ENCODE measurements at regions of chr7 and their contacts with region 1.

Region 1: GRCh38 chr7:7920481-7920880 is 48.1 kb upstream of the GLCCI1 start:
- DNase-seq: peak; percentile 76
- ATAC-seq: peak; percentile 93
- H3K4me3 ChIP-seq: no peak overlapping the region; the same call in 1 of the 2 replicates
- H3K27ac ChIP-seq: no peak overlapping the region; the same call in 1 of the 2 replicates
- H3K4me1 ChIP-seq: peaks cover 50% of the 10 kb centered on the region
- H3K27me3 ChIP-seq: no peaks in the 10 kb centered on the region
- CTCF ChIP-seq: no peak
- EP300 ChIP-seq: peak; percentile 82 to 91; a peak in 2 of 4 replicates
- POLR2A ChIP-seq: no peak
- RAD21 ChIP-seq: peak; percentile 11; the same call in 1 of the 2 replicates

Region 2: GRCh38 chr7:6092953-6093354 is 1827.5 kb before region 1 on chr7:
- CTCF ChIA-PET with region 1: no interaction called
- POLR2A ChIA-PET with region 1: no interaction called
- RAD21 ChIA-PET with region 1: no interaction called
- SMC1A ChIA-PET with region 1: no interaction called
- in situ Hi-C with region 1: no loop called
- intact Hi-C with region 1: no loop called
- DNase-seq: no peak
- ATAC-seq: no peak
- H3K4me3 ChIP-seq: no peak overlapping the region
- H3K27ac ChIP-seq: no peak overlapping the region
- H3K4me1 ChIP-seq: no peaks in the 10 kb centered on the region
- H3K27me3 ChIP-seq: no peaks in the 10 kb centered on the region
- CTCF ChIP-seq: no peak
- EP300 ChIP-seq: no peak
- POLR2A ChIP-seq: no peak
- RAD21 ChIP-seq: no peak

Region 3: DNA sequence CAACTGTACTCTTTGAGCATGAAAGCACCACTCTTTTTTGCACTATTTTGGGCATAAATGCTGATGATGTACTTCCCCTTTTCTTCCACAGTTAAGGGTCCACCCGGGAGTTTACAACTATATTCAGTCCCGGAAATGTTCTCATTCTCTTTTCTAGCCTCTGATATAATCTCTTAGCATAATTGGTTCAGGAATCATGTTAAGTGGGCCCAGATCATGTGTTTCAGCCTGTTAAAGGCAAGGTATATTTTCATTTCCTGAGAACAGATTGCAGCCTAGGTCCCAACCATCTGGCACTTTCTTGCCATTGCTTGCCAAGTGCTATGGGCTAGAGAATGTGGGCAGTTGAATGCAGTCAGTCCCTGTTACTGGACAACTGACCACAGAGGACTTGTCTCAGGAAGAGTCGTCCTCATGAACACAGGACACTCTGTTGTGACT is 63.3 kb before region 1 on chr7:
- CTCF ChIA-PET with region 1: interaction called, 6 read pairs
- POLR2A ChIA-PET with region 1: no interaction called
- RAD21 ChIA-PET with region 1: interaction called, 13 read pairs
- SMC1A ChIA-PET with region 1: interaction called, 17 read pairs
- in situ Hi-C with region 1: no loop called
- intact Hi-C with region 1: no loop called
- DNase-seq: no peak
- ATAC-seq: peak; percentile 84
- H3K4me3 ChIP-seq: no peak overlapping the region
- H3K27ac ChIP-seq: peak overlapping the region; percentile 29; the same call in 1 of the 2 replicates
- H3K4me1 ChIP-seq: peaks cover 4% of the 10 kb centered on the region
- H3K27me3 ChIP-seq: no peaks in the 10 kb centered on the region
- CTCF ChIP-seq: no peak
- EP300 ChIP-seq: no peak
- POLR2A ChIP-seq: no peak
- RAD21 ChIP-seq: no peak

Region 4: DNA sequence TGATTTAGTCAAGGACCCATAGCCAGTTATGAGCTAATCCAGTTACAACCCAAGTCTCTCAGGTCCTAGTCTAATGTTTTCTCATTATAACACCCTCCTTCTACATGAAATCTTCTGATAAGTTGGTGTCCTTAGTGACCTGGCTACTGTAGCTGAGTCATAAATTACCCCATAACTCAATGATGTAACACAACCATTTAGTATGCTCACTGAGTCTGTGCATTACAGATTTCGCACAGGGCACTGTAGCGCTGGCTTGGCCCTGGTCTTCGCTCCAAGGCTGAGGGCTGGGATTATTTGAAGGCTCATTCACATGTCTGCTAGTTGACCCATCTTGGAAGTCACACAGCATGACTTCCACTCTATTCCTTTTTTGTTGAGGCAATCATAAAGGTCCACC is 12.1 kb after region 1 on chr7:
- CTCF ChIA-PET with region 1: no interaction called
- POLR2A ChIA-PET with region 1: interaction called, 5 read pairs
- RAD21 ChIA-PET with region 1: interaction called, 5 read pairs
- SMC1A ChIA-PET with region 1: interaction called, 11 read pairs
- in situ Hi-C with region 1: no loop called
- intact Hi-C with region 1: no loop called
- DNase-seq: no peak
- ATAC-seq: no peak
- H3K4me3 ChIP-seq: no peak overlapping the region
- H3K27ac ChIP-seq: no peak overlapping the region
- H3K4me1 ChIP-seq: no peaks in the 10 kb centered on the region
- H3K27me3 ChIP-seq: no peaks in the 10 kb centered on the region
- CTCF ChIP-seq: no peak
- EP300 ChIP-seq: no peak
- POLR2A ChIP-seq: no peak
- RAD21 ChIP-seq: no peak

Region 5: GRCh38 chr7:7959979-7960670 is 39.6 kb after region 1 on chr7:
- CTCF ChIA-PET with region 1: interaction called, 8 read pairs
- POLR2A ChIA-PET with region 1: interaction called, 17 read pairs
- RAD21 ChIA-PET with region 1: interaction called, 52 read pairs
- SMC1A ChIA-PET with region 1: interaction called, 59 read pairs
- in situ Hi-C with region 1: no loop called
- intact Hi-C with region 1: no loop called
- DNase-seq: peak; percentile 79
- ATAC-seq: peak; percentile 94
- H3K4me3 ChIP-seq: no peak overlapping the region
- H3K27ac ChIP-seq: peak overlapping the region; percentile 43; the same call in 1 of the 2 replicates
- H3K4me1 ChIP-seq: peaks cover 42% of the 10 kb centered on the region
- H3K27me3 ChIP-seq: no peaks in the 10 kb centered on the region
- CTCF ChIP-seq: no peak
- EP300 ChIP-seq: peak; percentile 9 to 48; a peak in 1 of 4 replicates
- POLR2A ChIP-seq: no peak
- RAD21 ChIP-seq: peak; percentile 19; the same call in 1 of the 2 replicates

Region 6: DNA sequence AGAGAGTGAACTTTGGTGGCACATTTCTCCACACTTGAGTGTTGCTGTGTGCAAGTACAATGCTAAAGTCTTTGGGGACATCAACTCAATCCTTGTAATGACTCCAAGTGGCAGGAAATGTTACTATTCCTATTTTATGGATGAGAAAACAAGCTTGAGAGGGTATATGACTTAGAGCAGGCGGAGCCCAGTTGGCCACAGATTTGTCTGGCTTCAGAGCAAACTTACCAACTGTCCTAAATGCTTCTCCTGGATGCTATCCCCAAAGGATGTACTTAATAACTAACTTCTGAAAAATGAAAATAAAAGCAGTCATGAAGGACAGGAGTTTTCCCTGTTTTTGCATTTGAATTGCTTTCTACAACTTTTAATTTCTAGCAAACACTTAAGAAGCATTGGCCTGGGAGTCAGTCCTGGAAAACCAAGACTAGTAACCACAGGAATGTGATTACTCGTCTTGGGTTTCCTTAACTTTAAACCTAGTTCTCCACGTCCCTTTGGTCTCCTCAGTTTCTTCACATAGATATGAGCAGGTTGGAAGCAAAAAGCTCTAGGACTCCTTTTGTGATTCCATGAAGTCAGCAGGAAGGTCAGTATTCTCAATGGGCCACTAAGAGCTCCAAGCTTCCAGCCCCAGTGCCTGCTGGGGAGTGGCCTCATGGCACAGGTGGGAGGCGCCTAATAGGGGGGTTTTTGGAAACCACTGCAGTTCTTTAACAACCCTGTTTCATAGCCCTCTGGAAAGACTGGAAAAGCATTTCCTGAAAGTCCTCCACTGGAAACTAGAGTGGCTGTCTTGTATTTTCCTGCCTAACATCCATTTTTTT is 188.9 kb after region 1 on chr7:
- CTCF ChIA-PET with region 1: no interaction called
- POLR2A ChIA-PET with region 1: no interaction called
- RAD21 ChIA-PET with region 1: no interaction called
- SMC1A ChIA-PET with region 1: no interaction called
- in situ Hi-C with region 1: no loop called
- intact Hi-C with region 1: no loop called
- DNase-seq: no peak
- ATAC-seq: no peak
- H3K4me3 ChIP-seq: no peak overlapping the region
- H3K27ac ChIP-seq: no peak overlapping the region
- H3K4me1 ChIP-seq: peaks cover 12% of the 10 kb centered on the region
- H3K27me3 ChIP-seq: no peaks in the 10 kb centered on the region
- CTCF ChIP-seq: no peak
- EP300 ChIP-seq: no peak
- POLR2A ChIP-seq: no peak
- RAD21 ChIP-seq: no peak

Region 7: DNA sequence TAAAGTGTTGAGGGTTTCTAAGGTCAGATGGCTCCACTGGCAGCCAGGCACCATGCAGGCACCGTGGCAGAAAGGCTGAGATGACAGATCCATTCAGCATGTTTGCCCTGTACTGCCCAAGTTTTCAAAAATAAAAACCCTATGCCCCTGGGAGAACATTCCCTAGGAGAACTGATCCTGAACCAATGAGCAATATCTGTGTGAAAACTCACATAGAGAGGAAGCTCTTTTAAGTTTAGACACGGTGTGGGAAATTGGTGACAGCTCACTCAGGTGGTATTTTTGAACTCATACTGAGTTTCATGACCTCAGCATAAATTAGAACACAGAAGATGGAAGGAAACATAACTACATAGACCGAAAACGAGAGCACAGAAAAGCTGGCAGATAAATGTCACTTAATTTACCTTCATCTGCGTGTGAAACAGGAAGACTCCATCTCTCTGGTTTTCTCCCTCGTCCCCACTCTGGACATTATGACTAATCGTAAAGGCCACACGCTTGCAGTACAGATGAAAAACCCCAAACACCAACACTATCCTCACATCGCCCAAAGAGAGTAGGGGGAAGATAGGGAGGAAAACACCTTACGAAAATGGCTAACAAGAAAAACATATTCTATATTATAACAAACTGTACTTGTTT is 213.7 kb after region 1 on chr7:
- CTCF ChIA-PET with region 1: no interaction called
- POLR2A ChIA-PET with region 1: no interaction called
- RAD21 ChIA-PET with region 1: no interaction called
- SMC1A ChIA-PET with region 1: interaction called, 4 read pairs
- in situ Hi-C with region 1: no loop called
- intact Hi-C with region 1: loop called (anchors 5 kb)
- DNase-seq: peak; percentile 99
- ATAC-seq: peak; percentile 73
- H3K4me3 ChIP-seq: no peak overlapping the region
- H3K27ac ChIP-seq: peak overlapping the region; percentile 94
- H3K4me1 ChIP-seq: peaks cover 54% of the 10 kb centered on the region
- H3K27me3 ChIP-seq: no peaks in the 10 kb centered on the region
- CTCF ChIP-seq: no peak
- EP300 ChIP-seq: peak; percentile 81 to 92
- POLR2A ChIP-seq: no peak
- RAD21 ChIP-seq: peak; percentile 39; the same call in 1 of the 2 replicates